Heart left ventricle (tissue), 16 donors: ENCODE measurements at regions of chr11 and their contacts with region 1.

Region 1: GRCh38 chr11:12673924-12674570 is at the start of gene TEAD1:
- DNase-seq: peak; percentile 96 to 98 (median 97)
- ATAC-seq: peak; percentile 89 to 97 (median 95)
- H3K4me3 ChIP-seq: peak within 1 kb of the TSS; percentile 64 to 92 (median 72)
- H3K27ac ChIP-seq: peak within 1 kb of the TSS; percentile 84 to 98 (median 96)
- H3K4me1 ChIP-seq: peaks cover 3 to 37% (median 24%) of the 10 kb centered on the region in 12 donors
- H3K27me3 ChIP-seq: peaks cover 0 to 44% (median 0%) of the 10 kb centered on the region in 9 donors
- CTCF ChIP-seq: no peak
- POLR2A ChIP-seq: peak in 1 of 2 donors; percentile 77
- total RNA-seq, gene TEAD1: 89.8 to 161 (median 116) TPM

Region 2: DNA sequence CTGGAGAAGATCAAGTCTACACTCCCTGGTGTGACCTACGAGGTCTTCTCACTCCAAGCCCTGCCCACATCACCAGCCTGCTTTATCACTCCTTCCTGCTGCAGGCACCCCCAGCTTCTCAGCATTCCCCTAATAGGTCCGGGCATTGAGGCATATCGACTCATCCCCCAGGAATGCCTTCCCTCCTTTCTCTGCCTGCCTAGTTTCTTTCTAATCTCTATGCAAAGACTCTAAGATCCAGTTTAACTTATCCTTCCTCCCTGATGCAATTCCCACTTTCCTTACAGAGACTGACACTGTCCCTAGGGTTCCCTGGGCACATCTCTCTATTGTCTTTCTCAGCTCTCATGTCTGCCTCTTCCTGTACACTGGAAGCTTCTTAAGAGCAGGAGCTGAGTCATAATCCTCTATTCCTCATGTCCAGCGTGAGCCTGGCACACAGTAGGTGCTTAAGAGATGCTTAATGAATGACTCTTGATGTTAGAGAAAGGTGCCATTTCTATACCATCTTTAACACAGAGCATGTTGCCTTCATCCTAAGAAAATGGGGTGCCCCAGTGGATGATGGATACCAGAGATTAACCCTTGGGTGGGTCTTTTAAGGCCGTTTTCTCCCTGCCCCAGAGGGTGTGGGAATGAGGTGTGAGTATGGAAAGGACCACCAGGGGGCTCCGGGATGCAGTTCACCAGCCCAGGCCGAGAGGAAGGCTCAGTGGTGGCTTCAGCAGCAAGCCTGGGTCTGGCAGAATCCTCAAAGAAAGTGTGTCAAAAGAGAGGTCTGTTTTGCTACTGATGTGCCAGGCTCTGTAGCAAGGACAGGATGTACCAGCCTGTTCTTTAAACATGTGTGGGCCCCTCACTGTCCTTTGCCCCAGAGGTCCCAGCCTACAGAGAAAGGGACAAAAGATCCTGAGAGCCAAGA is 262.0 kb before region 1 on chr11:
- intact Hi-C with region 1: loop called in 7 of 10 experiments (anchors 5 to 10 kb)
- DNase-seq: peak in 4 of 5 donors; percentile 59 to 74 (median 72)
- ATAC-seq: peak; percentile 81 to 88 (median 84)
- H3K4me3 ChIP-seq: no peak overlapping the region
- H3K27ac ChIP-seq: peak overlapping the region in 9 of 12 donors; percentile 5 to 98 (median 31)
- H3K4me1 ChIP-seq: peaks cover 0 to 77% (median 44%) of the 10 kb centered on the region in 12 donors
- H3K27me3 ChIP-seq: no peaks in the 10 kb centered on the region
- CTCF ChIP-seq: peak; percentile 57 to 85 (median 78)
- POLR2A ChIP-seq: no peak

Region 3: DNA sequence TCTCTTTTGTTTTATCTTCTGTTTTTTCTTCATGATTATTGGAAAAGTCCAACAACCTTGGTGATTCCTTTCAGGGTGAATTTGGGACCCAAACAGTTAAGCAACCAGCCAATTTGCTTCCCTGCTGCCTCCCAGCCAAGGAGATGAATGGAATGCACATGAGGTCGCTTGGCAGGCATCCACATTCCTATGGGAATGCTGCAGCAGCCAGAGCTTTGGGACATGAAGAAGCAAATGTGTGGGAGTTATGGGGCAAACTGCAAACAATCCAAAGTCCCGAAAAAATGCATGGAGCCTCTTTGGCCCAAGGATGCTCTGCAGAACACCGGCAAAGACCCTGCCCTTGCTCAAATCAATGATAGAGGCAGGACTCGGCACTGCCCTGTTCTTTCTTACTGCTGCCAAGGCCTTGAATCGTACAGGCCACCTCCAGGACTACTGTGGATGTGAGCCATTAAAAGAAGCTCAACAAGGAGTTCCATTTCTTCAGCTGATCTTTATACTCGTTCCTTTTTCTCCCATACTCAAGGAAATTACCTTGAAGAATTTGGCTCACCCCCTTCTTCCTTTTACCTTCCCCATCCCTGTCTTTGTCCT is 117.2 kb before region 1 on chr11:
- intact Hi-C with region 1: loop called in 1 of 10 experiments (anchors 10 kb)
- DNase-seq: peak; percentile 73 to 92 (median 85)
- ATAC-seq: peak; percentile 50 to 82 (median 68)
- H3K4me3 ChIP-seq: no peak overlapping the region
- H3K27ac ChIP-seq: peak overlapping the region in 11 of 12 donors; percentile 11 to 76 (median 69)
- H3K4me1 ChIP-seq: peaks cover 0 to 30% (median 18%) of the 10 kb centered on the region in 12 donors
- H3K27me3 ChIP-seq: no peaks in the 10 kb centered on the region
- CTCF ChIP-seq: no peak
- POLR2A ChIP-seq: no peak

Region 4: GRCh38 chr11:12724301-12725046 is 50.4 kb after region 1 on chr11:
- intact Hi-C with region 1: loop called in 1 of 10 experiments (anchors 5 kb)
- DNase-seq: peak; percentile 70 to 80 (median 73)
- ATAC-seq: peak in 3 of 4 donors; percentile 39 to 61 (median 45)
- H3K4me3 ChIP-seq: no peak overlapping the region
- H3K27ac ChIP-seq: peak overlapping the region in 9 of 12 donors; percentile 1 to 79 (median 35)
- H3K4me1 ChIP-seq: peaks cover 11 to 81% (median 54%) of the 10 kb centered on the region in 12 donors
- H3K27me3 ChIP-seq: no peaks in the 10 kb centered on the region
- CTCF ChIP-seq: no peak
- POLR2A ChIP-seq: no peak

Region 5: GRCh38 chr11:12827929-12828812 is 154.1 kb after region 1 on chr11:
- intact Hi-C with region 1: loop called in 3 of 10 experiments (anchors 5 to 10 kb)
- DNase-seq: peak in 2 of 5 donors; percentile 38 to 39
- ATAC-seq: peak; percentile 63 to 87 (median 74)
- H3K4me3 ChIP-seq: peak overlapping the region in 11 of 12 donors; percentile 16 to 61 (median 46)
- H3K27ac ChIP-seq: peak overlapping the region in 11 of 12 donors; percentile 12 to 73 (median 53)
- H3K4me1 ChIP-seq: peaks cover 0 to 55% (median 27%) of the 10 kb centered on the region in 12 donors
- H3K27me3 ChIP-seq: no peaks in the 10 kb centered on the region
- CTCF ChIP-seq: no peak
- POLR2A ChIP-seq: no peak